Activated CD4-positive, alpha-beta T cell treated with anti-CD3 and anti-CD28 coated beads for 36 hours (primary cell): ENCODE measurements at regions of chr11 and their contacts with region 1.

Region 1: GRCh38 chr11:67507864-67508485 is at the start of gene CDK2AP2:
- DNase-seq: peak; percentile 99
- ATAC-seq: peak; percentile 78
- H3K4me3 Mint-ChIP-seq: peak within 1 kb of the TSS; percentile 89
- H3K27ac Mint-ChIP-seq: peak within 1 kb of the TSS; percentile 88
- H3K4me1 Mint-ChIP-seq: peaks cover 31% of the 10 kb centered on the region
- H3K27me3 Mint-ChIP-seq: no peaks in the 10 kb centered on the region
- total RNA-seq, gene CDK2AP2: 64.1 to 68.7 TPM

Region 2: DNA sequence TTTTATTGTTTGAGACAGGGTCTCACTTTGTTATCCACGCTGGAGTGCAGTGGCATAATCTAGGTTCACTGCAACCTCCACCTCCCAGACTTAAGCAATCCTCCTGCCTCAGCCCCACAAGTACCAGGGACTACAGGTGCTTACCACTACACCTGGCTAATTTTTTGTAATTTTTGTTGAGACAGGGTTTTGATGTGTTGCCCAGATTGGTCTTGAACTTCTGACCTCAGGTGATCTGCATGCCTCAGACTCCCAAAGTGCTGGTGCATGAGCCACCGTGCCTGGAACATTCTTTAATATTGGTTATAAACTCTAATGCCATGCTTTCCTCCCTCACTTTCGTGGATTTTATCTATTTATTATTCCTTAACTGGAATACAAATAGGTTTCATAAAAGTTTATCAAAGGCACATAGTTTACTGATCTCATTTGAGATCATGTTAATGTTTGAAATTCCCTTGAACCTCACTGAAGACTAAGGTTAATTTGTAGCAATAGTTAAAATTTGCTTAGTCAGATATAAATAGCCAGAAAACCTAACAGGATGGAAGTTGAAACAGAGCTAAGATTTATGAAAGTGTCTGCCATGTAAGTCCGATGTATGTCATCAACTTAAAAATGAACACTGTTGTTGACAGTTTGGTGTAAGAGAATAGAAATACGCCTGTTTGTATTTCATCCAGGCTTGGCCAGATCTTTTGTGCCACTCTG is 361.3 kb before region 1 on chr11:
- CTCF ChIA-PET with region 1: no interaction called
- POLR2A ChIA-PET with region 1: no interaction called
- intact Hi-C with region 1: no loop called
- DNase-seq: no peak
- ATAC-seq: no peak
- H3K4me3 Mint-ChIP-seq: no peak overlapping the region
- H3K27ac Mint-ChIP-seq: no peak overlapping the region
- H3K4me1 Mint-ChIP-seq: peaks cover 7% of the 10 kb centered on the region
- H3K27me3 Mint-ChIP-seq: no peaks in the 10 kb centered on the region

Region 3: GRCh38 chr11:67265633-67266423 is 242.1 kb before region 1 on chr11:
- CTCF ChIA-PET with region 1: no interaction called
- POLR2A ChIA-PET with region 1: no interaction called
- intact Hi-C with region 1: loop called in 1 of 2 experiments (anchors 1 kb)
- DNase-seq: peak; percentile 87
- ATAC-seq: peak; percentile 18
- H3K4me3 Mint-ChIP-seq: peak overlapping the region; percentile 72
- H3K27ac Mint-ChIP-seq: peak overlapping the region; percentile 90
- H3K4me1 Mint-ChIP-seq: peaks cover 78% of the 10 kb centered on the region
- H3K27me3 Mint-ChIP-seq: no peaks in the 10 kb centered on the region

Region 4: GRCh38 chr11:67401495-67402191 is 106.3 kb before region 1 on chr11 and contains the start of gene PPP1CA:
- CTCF ChIA-PET with region 1: interaction called, 5 read pairs
- POLR2A ChIA-PET with region 1: interaction called, 4 read pairs
- intact Hi-C with region 1: loop called (anchors 1 kb)
- DNase-seq: peak; percentile 97
- ATAC-seq: peak; percentile 67
- H3K4me3 Mint-ChIP-seq: peak within 1 kb of the TSS; percentile 82
- H3K27ac Mint-ChIP-seq: peak within 1 kb of the TSS; percentile 87
- H3K4me1 Mint-ChIP-seq: peaks cover 52% of the 10 kb centered on the region
- H3K27me3 Mint-ChIP-seq: no peaks in the 10 kb centered on the region
- total RNA-seq, gene PPP1CA: 199 to 227 TPM

Region 5: GRCh38 chr11:67439321-67439883 is 68.6 kb before region 1 on chr11:
- CTCF ChIA-PET with region 1: no interaction called
- POLR2A ChIA-PET with region 1: no interaction called
- intact Hi-C with region 1: loop called (anchors 1 to 2 kb)
- DNase-seq: peak; percentile 77
- ATAC-seq: peak; percentile 2
- H3K4me3 Mint-ChIP-seq: peak overlapping the region; percentile 84
- H3K27ac Mint-ChIP-seq: peak overlapping the region; percentile 97
- H3K4me1 Mint-ChIP-seq: peaks cover 49% of the 10 kb centered on the region
- H3K27me3 Mint-ChIP-seq: no peaks in the 10 kb centered on the region

Region 6: DNA sequence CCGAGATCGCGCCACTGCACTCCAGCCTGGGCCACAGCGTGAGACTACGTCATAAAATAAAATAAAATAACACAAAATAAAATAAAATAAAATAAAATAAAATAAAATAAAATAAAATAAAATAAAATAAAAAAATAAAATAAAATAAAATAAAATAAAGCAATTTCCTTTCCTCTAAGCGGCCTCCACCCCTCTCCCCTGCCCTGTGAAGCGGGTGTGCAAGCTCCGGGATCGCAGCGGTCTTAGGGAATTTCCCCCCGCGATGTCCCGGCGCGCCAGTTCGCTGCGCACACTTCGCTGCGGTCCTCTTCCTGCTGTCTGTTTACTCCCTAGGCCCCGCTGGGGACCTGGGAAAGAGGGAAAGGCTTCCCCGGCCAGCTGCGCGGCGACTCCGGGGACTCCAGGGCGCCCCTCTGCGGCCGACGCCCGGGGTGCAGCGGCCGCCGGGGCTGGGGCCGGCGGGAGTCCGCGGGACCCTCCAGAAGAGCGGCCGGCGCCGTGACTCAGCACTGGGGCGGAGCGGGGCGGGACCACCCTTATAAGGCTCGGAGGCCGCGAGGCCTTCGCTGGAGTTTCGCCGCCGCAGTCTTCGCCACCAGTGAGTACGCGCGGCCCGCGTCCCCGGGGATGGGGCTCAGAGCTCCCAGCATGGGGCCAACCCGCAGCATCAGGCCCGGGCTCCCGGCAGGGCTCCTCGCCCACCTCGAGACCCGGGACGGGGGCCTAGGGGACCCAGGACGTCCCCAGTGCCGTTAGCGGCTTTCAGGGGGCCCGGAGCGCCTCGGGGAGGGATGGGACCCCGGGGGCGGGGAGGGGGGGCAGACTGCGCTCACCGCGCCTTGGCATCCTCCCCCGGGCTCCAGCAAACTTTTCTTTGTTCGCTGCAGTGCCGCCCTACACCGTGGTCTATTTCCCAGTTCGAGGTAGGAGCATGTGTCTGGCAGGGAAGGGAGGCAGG is 75.6 kb after region 1 on chr11 and contains the start of gene GSTP1:
- CTCF ChIA-PET with region 1: no interaction called
- POLR2A ChIA-PET with region 1: no interaction called
- intact Hi-C with region 1: loop called in 1 of 2 experiments (anchors 2 kb)
- DNase-seq: peak; percentile 90
- ATAC-seq: peak; percentile 85
- H3K4me3 Mint-ChIP-seq: peak within 1 kb of the TSS; percentile 89
- H3K27ac Mint-ChIP-seq: peak within 1 kb of the TSS; percentile 94
- H3K4me1 Mint-ChIP-seq: peaks cover 52% of the 10 kb centered on the region
- H3K27me3 Mint-ChIP-seq: peaks cover 10% of the 10 kb centered on the region
- total RNA-seq, gene GSTP1: 376 to 463 TPM

Region 7: DNA sequence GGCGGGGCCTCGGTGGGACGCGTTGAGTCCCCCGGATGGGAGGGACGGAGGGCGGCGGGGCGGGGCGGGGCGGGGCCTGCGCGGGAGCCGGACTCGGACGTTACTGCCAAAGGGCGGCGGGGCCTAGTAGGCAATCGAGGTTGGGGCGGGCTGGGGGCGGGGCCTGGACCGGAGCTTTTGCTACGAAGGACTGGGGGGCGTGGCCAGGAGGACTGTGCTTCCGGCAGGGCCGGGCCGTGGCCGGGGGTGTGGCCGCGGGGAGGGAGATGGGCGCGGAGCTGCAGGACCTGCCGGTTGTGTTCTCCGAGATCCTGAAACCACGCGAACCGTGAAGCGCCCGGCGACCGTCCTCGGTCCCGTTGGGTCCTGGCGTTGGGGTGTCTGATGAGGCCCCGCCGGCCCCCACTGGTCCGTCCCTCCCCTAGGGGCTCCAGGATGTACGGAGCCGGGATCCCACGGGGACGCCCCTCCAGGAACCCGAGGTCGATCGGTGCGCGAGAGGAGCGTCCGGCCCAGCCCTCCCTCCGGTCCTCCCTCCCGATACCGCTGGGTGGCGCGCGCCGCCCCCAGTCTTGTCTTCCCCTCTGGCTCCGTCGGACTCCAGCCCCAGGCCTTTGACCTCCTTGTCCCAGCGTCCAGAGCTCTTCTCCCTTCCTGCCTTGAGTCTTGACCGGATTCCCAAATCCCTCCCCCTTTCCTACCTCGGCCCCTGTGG is 122.4 kb after region 1 on chr11:
- CTCF ChIA-PET with region 1: no interaction called
- POLR2A ChIA-PET with region 1: no interaction called
- intact Hi-C with region 1: loop called in 1 of 2 experiments (anchors 1 kb)
- DNase-seq: peak; percentile 99
- ATAC-seq: peak; percentile 79
- H3K4me3 Mint-ChIP-seq: peak overlapping the region; percentile 79
- H3K27ac Mint-ChIP-seq: peak overlapping the region; percentile 73
- H3K4me1 Mint-ChIP-seq: peaks cover 7% of the 10 kb centered on the region
- H3K27me3 Mint-ChIP-seq: no peaks in the 10 kb centered on the region